ENCODE measurements at regions of chr19 and their contacts with region 1.

Region 1: DNA sequence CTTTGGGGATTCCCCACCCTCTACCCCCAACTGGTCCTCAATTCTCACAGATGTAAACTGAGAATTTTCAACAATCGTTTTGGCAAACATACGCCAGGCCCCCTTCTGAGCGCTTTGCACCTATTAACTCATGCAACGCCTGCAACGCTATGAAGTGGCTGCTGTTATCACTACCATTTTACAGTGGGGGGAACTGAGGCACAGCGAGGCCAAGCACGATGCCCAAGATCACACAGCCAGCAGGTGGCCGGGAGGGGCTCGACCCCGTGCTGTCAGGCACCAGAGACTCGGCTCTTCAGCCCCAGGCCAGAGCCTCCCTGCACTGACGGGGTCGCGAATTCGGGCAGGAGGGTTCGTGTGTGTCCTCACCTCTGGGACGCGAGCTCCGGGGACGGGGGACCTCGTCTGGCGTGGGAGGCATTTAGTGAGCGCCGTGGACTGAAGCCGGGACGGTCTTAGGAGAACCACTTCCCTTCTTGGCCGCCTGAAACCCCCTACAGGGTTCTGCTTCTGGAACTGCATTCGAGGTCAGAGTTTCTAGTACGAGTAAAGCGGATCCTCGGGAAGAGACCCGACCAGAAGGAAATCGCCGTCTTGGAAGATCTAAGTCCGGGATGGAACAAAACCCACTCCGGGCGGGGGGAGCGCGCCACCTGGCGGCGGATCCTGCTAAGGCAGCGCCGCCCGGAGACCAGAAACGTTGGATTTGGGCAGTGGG is 21.0 kb downstream of the ZNF114 start:
- DNase-seq: peak; percentile 78
- H3K4me3 ChIP-seq: peak overlapping the region; percentile 4 to 58 (median 42)
- H3K27ac ChIP-seq: no peak overlapping the region
- H3K4me1 ChIP-seq: peaks cover 9% of the 10 kb centered on the region
- H3K27me3 ChIP-seq: no peaks in the 10 kb centered on the region
- CTCF ChIP-seq: peak; percentile 97 to 98
- POLR2A ChIP-seq: no peak

Region 2: DNA sequence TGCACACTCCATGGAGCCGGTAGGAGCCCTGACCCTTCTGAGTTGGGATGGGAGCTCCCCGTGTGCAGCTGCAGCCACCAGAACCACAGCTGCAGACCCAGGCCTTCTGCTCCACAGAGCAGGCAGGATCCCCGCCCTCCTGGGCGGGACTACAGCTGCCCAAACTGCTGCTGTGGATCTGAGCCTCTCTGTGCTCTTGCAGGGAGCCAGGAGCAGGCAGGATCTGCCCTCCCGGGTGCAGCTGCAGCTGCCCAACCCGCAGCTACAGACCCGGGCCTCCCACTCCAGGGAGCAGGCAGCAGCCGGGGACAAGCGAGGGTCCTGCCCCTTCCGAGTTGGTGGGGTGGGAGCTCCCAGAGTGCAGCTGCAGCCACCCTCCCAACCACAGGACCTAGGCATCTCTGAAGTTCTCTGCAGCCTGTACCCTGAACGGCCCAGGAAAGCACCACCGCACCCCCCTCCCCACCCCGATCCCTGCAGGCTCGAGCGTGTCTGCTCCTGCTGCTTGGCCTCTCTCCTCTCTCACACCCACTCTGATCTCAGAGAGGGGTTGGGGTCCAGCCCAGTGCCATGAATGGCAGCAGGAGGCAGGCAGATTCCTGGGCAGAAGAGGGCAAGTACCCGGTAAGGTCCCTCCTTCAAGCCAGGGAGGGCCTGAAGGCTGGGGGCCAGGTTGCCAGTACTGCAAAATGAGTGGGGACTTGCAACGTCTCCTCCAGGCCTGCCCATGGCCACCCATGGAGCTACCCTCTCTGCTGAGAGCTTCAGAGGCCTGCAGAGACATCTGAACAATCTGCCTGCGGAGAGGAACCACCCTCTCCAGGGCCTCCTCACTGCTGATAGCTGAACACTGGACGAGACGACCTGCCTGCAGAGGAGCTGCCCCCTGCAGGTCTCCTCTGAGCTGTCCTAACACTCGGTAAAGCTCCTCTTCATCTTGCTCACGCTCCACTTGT is 18.0 kb after region 1 on chr19:
- CTCF ChIA-PET with region 1: interaction called, 5 read pairs
- POLR2A ChIA-PET with region 1: no interaction called
- dilution Hi-C with region 1: no loop called
- intact Hi-C with region 1: loop called (anchors 2 kb)
- DNase-seq: peak; percentile 25
- H3K4me3 ChIP-seq: no peak overlapping the region
- H3K27ac ChIP-seq: no peak overlapping the region
- H3K4me1 ChIP-seq: peaks cover 20% of the 10 kb centered on the region
- H3K27me3 ChIP-seq: peaks cover 4 to 6% of the 10 kb centered on the region in 2 experiments
- CTCF ChIP-seq: peak in 1 of 2 donors; percentile 36
- POLR2A ChIP-seq: no peak

Region 3: DNA sequence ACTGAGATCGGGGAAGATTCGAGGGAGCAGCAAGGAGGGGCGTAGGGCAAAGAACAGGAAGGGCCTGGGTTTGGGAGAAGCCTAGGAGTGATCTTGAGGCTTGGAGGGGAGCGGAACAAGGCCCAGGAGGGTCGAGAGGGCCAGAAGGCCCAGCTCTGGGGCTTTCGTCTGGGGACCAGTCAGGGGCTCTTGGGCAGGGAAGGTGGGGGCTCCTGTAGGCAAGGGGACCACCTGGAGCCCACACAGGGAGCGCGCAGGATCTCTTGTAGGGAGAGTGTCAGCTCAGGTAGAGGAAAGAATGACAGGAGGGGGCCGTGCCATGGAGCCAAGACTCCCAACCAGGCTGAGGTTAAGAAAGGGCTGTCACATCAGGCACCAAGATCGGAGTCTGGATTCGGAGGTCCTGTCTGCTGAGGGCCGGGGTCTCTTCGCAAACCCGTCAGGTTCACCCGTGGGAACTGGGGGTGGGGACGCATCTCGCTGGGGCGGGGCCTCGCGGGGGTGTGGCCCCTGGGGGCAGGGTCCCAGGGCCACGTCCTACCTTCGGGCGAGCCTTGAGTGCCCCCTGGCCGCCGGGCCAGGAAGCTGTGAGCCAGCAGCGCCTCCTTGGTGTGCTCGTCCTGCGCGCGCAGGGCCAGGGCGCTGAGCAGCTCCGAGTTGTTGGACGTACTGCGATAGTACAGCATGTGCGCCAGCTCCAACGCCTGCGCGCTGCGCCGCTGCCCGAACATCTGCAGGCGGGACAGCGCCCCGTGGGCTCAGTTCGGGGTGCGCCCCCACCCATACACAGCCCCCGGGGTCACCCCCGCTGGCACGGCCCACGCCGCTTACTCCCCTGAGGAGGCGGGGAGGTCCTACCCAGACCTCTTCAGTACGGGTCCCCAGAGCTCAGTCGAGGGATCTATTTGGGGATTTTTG is 42.8 kb after region 1 on chr19:
- CTCF ChIA-PET with region 1: interaction called, 10 read pairs
- POLR2A ChIA-PET with region 1: no interaction called
- dilution Hi-C with region 1: no loop called
- intact Hi-C with region 1: loop called (anchors 1 kb)
- DNase-seq: peak; percentile 92
- H3K4me3 ChIP-seq: peak overlapping the region in 2 of 3 experiments; percentile 20 to 33
- H3K27ac ChIP-seq: peak overlapping the region; percentile 64
- H3K4me1 ChIP-seq: peaks cover 16% of the 10 kb centered on the region
- H3K27me3 ChIP-seq: no peaks in the 10 kb centered on the region
- CTCF ChIP-seq: peak; percentile 77 to 94
- POLR2A ChIP-seq: no peak

Region 4: DNA sequence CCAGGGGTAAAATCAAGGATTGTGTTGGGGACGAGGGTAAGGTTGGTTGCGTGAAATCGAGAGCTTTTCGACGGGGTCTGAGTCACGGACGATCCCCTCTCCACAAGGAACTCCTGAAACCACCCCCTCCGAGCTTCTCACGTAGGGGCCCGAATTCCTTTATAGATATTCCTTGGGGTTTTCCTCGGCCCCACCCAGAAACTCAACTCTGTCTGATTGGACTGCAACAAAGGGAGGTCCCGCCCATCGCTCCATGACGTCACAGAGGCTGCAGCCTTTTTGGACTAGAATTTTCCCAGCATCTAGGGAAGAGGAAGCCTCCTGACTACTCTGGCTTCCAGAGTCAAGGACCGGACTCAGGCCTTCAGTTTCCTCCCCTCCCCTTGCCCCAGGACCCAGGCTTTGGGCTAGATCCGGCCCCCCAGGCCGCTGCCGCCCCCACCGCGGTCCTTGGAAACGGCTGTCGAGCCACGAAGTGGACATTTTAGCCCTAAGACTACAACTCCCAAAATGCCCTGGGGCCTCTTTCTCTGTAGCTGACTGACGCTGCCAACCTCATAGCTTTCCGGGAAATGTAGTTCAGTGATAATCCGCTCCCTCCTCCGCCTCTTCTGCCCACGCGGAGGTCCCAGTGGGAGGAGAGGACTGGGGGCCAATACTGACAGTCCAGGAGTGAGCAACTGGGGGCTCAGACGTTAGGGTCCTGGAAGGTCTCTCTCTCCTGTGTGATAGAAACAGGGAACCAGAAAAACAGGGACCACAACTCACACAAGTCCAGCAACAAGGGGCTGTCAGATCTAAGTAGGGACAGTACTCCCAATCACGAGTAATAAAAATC is 456.0 kb after region 1 on chr19 and contains the start of gene IZUMO1:
- CTCF ChIA-PET with region 1: no interaction called
- POLR2A ChIA-PET with region 1: no interaction called
- dilution Hi-C with region 1: no loop called
- intact Hi-C with region 1: no loop called
- DNase-seq: peak; percentile 95
- H3K4me3 ChIP-seq: peak within 1 kb of the TSS; percentile 51 to 71 (median 67)
- H3K27ac ChIP-seq: peak within 1 kb of the TSS; percentile 72
- H3K4me1 ChIP-seq: peaks cover 7% of the 10 kb centered on the region
- H3K27me3 ChIP-seq: no peaks in the 10 kb centered on the region
- CTCF ChIP-seq: no peak
- POLR2A ChIP-seq: peak; percentile 25
- total RNA-seq, gene IZUMO1: 1.2 TPM in 2 replicates

Measured in endothelial cell of umbilical vein (primary cell).